Activated B cell treated with CpG ODN at 0.5 μM for 24 hours (primary cell): ENCODE measurements at regions of chr22 and their contacts with region 1.

Region 1: DNA sequence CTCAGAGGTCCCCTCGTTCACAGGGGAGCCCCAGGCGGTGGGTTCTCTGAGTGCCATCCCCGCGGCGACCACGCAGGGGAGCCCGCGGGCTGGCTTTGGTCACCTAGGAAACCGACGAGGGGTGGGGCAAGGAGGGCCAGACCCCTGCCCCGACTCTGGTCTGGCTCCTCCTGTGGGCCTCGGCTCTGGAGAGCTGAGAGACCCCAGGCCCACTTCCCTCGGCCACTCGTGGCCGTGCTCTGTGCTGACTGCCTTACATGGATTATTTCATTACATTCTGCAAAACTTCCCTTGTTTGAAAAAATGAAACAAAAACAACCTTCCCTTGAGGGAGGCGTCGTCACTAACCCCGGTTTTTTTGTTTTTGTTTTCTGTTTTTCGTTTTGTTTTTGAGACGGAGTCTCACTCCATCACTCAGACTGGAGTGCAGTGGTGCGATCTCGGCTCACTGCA is 15.1 kb upstream of the CYTH4 start:
- DNase-seq: peak; percentile 80
- ATAC-seq: peak; percentile 99
- H3K4me3 Mint-ChIP-seq: peak overlapping the region; percentile 88
- H3K27ac Mint-ChIP-seq: peak overlapping the region; percentile 93
- H3K4me1 Mint-ChIP-seq: peaks cover 31% of the 10 kb centered on the region
- H3K27me3 Mint-ChIP-seq: no peaks in the 10 kb centered on the region
- CTCF ChIP-seq: peak; percentile 29

Region 2: DNA sequence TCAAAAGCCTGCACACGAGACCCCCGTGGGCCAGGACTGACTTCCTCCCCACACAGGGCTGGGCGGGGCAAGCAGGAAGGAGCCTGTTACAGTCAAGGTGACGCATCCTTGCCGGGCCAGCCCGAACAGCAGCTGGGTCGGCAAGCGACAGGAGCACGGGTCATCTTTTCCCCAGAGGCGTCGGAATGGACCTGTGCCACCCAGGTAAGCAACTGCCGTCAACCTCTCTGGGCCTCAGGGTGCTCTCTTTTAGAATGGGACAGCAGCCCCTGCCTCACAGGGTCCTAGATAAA is 15.2 kb after region 1 on chr22 and contains the start of gene CYTH4:
- CTCF ChIA-PET with region 1: interaction called, 9 read pairs
- POLR2A ChIA-PET with region 1: interaction called, 4 read pairs
- intact Hi-C with region 1: loop called (anchors 1 kb)
- DNase-seq: peak; percentile 64
- ATAC-seq: peak; percentile 69
- H3K4me3 Mint-ChIP-seq: peak within 1 kb of the TSS; percentile 86
- H3K27ac Mint-ChIP-seq: peak within 1 kb of the TSS; percentile 99
- H3K4me1 Mint-ChIP-seq: peaks cover 81% of the 10 kb centered on the region
- H3K27me3 Mint-ChIP-seq: no peaks in the 10 kb centered on the region
- CTCF ChIP-seq: no peak
- total RNA-seq, gene CYTH4: 37.2 and 40.3 TPM in 2 replicates

Region 3: GRCh38 chr22:37330200-37331033 is 63.3 kb after region 1 on chr22:
- CTCF ChIA-PET with region 1: no interaction called
- POLR2A ChIA-PET with region 1: no interaction called
- intact Hi-C with region 1: no loop called
- DNase-seq: no peak
- ATAC-seq: peak; percentile 71
- H3K4me3 Mint-ChIP-seq: no peak overlapping the region
- H3K27ac Mint-ChIP-seq: peak overlapping the region; percentile 46
- H3K4me1 Mint-ChIP-seq: peaks cover 12% of the 10 kb centered on the region
- H3K27me3 Mint-ChIP-seq: peaks cover 60% of the 10 kb centered on the region
- CTCF ChIP-seq: no peak

Region 4: DNA sequence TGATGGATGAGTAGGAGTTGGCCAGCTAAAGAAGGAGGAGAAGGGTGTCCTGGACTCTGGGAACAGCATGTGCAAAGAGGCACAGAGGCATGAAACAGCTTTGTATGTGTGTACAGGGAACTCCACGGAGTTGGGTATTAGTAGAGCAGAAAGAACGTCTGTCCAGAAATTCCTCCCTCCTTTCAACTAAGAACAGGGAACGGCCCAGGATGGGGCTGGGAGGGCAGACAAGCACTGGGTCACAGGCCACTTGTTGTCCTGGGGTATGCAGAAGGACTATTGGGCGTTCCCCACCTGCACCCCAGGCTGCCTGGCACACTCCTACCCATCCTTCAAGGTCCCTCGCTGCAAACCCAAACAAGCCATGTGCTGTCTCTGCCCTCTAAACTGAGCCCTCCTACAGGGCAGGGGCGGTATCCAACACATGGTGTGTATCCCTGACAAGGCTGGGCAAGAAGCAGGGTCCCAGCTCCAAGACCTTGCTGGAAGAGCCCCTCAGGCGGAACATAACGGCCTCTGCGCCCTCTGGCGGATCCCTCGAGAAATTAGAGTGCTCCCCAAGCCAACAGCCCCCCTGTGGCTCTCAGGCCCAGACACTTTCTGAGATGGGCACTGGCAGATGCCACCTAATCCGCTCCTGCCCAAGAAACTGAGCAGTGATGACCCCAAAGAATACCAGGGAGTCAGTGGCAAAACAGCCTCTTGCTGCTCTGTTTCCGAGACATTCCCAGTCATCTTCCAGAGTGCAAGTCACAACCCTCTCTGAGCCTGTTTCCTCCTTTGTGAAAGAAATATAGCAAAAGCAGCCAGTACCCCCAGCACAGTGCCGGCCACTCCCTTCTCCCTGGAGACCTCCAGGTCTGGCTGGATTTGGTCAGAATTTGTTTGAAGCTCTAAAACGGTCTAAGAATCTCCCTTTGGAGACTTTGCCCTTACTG is 161.8 kb after region 1 on chr22:
- CTCF ChIA-PET with region 1: interaction called, 9 read pairs
- POLR2A ChIA-PET with region 1: no interaction called
- intact Hi-C with region 1: loop called (anchors 1 kb)
- DNase-seq: peak; percentile 42
- ATAC-seq: peak; percentile 64
- H3K4me3 Mint-ChIP-seq: no peak overlapping the region
- H3K27ac Mint-ChIP-seq: no peak overlapping the region
- H3K4me1 Mint-ChIP-seq: peaks cover 17% of the 10 kb centered on the region
- H3K27me3 Mint-ChIP-seq: peaks cover 76% of the 10 kb centered on the region
- CTCF ChIP-seq: no peak

Region 5: GRCh38 chr22:37457093-37457893 is 190.1 kb after region 1 on chr22:
- CTCF ChIA-PET with region 1: interaction called, 18 read pairs
- POLR2A ChIA-PET with region 1: no interaction called
- intact Hi-C with region 1: loop called (anchors 1 kb)
- DNase-seq: peak; percentile 71
- ATAC-seq: peak; percentile 95
- H3K4me3 Mint-ChIP-seq: no peak overlapping the region
- H3K27ac Mint-ChIP-seq: no peak overlapping the region
- H3K4me1 Mint-ChIP-seq: no peaks in the 10 kb centered on the region
- H3K27me3 Mint-ChIP-seq: no peaks in the 10 kb centered on the region
- CTCF ChIP-seq: peak; percentile 42

Region 6: DNA sequence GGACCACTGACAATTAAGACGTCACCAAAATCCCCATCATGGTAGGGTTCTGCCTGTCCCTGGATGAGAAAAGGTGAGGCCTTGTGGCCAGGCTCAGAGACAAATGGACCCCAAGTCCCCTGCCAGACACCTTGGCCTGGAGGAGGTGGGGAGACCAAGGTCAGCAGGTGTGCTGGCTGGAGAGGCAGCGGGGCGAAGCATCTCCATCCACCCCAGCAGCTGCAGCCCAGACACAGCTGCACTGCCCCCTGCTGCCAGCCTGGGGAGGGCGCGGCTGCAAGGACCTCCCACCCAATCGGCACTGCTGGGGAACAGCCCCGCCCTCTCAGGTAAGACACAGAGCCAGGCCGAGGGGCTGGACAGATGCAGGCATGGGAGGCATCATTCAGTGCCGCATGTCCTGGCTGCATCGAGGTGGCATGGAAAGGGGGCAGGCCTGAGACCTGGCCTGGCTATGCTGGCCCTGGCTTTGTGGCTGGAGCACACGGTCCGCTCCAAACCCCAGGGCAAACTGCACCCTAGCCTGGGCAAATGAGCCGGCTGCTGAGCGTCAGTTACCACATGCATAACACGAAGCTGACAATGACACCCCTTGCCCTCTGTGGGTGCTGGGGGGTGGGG is 231.2 kb after region 1 on chr22:
- CTCF ChIA-PET with region 1: no interaction called
- POLR2A ChIA-PET with region 1: no interaction called
- intact Hi-C with region 1: loop called (anchors 1 kb)
- DNase-seq: peak; percentile 64
- ATAC-seq: peak; percentile 100
- H3K4me3 Mint-ChIP-seq: no peak overlapping the region
- H3K27ac Mint-ChIP-seq: no peak overlapping the region
- H3K4me1 Mint-ChIP-seq: peaks cover 6% of the 10 kb centered on the region
- H3K27me3 Mint-ChIP-seq: peaks cover 26% of the 10 kb centered on the region
- CTCF ChIP-seq: no peak

Region 7: DNA sequence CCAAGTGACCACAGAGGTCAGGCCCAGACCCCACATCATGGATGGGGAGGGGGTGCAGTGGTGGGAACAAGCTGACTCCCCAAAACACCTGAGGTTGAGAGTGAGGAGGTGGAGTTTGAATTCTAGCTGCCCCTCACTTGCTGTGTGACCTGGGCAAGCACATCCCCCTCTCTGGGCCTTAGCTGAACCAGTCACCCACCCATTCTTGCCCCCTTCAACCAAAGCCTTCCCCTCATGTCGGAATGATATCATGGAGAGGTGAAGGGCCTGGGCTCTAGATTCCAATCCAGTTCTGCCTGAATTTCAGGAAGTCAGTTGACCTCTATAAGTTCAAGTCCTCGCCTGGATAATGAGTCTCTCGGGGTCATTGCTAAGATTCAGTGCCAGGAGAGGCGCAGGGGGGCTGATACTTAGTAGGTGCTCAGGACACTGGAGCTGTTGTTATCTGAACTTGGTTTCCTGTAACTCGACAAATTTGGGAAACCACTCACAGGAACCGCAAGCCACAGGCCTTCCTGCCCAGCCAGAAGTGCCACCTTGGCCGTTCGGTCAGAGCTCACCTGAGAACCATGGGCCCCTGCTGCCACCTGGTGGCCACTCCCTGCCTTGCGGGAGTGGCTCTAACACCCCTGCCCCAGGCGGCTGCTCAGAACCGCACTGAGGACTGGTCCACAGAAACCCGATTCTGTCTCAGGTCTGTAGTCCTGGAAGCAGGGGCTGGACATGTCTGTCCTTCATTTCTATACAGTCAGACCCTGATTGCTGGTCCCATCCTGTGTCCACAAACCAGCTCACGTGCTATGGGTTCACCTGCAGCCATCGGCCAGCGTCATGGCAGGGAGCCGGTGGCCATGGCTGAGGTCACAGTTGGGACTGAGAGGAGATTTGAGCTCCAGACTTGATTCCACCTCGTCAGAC is 300.0 kb after region 1 on chr22:
- CTCF ChIA-PET with region 1: interaction called, 7 read pairs
- POLR2A ChIA-PET with region 1: no interaction called
- intact Hi-C with region 1: loop called (anchors 1 kb)
- DNase-seq: peak; percentile 84
- ATAC-seq: peak; percentile 94
- H3K4me3 Mint-ChIP-seq: peak overlapping the region; percentile 32
- H3K27ac Mint-ChIP-seq: peak overlapping the region; percentile 53
- H3K4me1 Mint-ChIP-seq: peaks cover 21% of the 10 kb centered on the region
- H3K27me3 Mint-ChIP-seq: peaks cover 21% of the 10 kb centered on the region
- CTCF ChIP-seq: peak; percentile 90